ENCODE measurements at regions of chr12 and their contacts with region 1.

Region 1: DNA sequence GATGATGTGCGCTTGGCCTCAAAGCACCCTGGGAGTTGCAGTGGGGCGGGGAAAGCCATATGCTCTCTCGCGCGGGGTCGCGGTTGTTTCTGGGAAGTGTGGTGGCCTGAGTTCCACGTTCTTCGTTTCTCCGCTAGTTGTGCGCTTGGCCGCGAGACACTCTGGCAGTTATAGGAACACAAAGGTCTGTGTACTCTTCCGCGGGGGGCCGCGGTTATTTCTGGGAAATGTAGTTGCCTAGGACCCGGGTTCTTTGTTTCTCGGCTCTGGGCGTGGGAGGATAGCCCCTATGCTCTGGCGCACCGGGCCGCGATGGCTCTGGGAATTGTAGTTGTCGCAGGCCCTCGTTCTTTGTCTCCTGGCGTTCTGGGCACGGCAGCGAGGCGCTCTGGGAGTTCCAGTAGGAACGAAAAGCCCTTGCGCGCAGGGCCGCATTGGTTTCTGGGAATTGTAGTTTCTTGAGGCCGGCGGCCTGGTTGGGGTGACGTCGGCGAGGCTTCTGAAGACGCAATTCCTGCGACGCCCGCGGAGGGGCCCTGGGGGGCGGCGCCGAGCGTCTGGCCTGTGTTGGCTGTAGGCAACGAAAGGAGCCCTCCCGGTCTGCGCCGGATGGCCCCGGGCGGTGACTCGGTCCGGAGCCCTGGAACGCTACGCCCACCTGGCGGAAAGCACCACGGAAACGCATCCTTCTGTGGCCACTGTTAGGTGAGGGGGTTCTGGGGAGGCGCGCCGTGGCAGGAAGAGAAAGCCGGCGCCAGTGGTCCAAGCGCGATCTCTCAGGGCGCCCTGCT is at the start of gene ZNF140:
- DNase-seq: peak; percentile 98
- H3K4me3 ChIP-seq: peak within 1 kb of the TSS; percentile 86
- H3K27ac ChIP-seq: peak within 1 kb of the TSS; percentile 87
- H3K4me1 ChIP-seq: peaks cover 15% of the 10 kb centered on the region
- CTCF ChIP-seq: 0 out of 2 replicates have a peak, but pooled peaks have one; percentile 35
- total RNA-seq, gene ZNF140: 13.4 and 16.3 TPM in 2 replicates

Region 2: DNA sequence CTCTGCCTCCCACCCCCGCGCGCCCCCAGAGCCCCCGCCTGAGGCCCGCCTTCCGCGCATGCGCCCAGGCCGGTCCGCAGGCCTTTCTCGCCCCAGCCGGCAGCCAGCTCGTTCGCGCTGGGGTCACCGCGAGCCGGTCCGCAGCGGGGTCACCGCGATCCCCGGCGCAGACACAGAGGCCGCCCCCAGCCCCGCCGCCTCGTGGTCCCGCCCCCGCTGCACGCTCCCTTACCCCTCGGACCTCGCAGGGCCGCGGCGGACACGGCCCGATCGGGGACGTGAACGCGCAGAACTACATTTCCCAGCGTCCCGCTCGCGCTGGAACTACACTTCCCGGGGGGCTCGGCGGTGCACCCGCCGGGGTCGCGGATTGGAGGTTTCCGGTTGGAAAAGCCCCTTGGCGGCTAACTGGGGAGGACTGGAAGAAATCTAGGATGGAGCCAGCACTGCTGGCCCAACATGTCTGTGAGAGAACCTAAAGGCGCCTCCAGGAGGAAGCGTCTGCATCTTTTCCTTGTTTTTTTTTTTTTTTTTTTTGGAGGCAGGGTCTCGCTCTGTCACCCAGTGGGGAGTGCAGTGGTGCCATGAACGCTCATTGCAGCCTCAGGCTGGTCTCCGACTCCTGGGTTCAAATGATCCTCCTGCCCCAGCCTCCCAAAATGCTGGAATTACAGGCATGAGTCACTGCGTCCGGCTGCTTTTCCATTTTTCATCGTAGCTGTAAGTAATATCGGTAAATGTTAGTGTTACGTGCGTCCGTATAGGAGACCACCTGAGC is 124.4 kb before region 1 on chr12 and contains the start of gene ZNF605:
- CTCF ChIA-PET with region 1: no interaction called
- POLR2A ChIA-PET with region 1: interaction called, 4 read pairs
- intact Hi-C with region 1: loop called (anchors 1 kb)
- DNase-seq: peak; percentile 89
- H3K4me3 ChIP-seq: peak within 1 kb of the TSS; percentile 95
- H3K27ac ChIP-seq: peak within 1 kb of the TSS; percentile 34
- H3K4me1 ChIP-seq: peaks cover 5% of the 10 kb centered on the region
- CTCF ChIP-seq: no peak
- total RNA-seq, gene ZNF605: 6.6 and 7.1 TPM in 2 replicates

Region 3: GRCh38 chr12:132986001-132986912 is 94.3 kb before region 1 on chr12 and contains the start of gene ZNF26:
- CTCF ChIA-PET with region 1: no interaction called
- POLR2A ChIA-PET with region 1: interaction called, 4 read pairs
- intact Hi-C with region 1: loop called (anchors 1 kb)
- DNase-seq: peak; percentile 96
- H3K4me3 ChIP-seq: peak within 1 kb of the TSS; percentile 94
- H3K27ac ChIP-seq: no peak within 1 kb of the TSS
- H3K4me1 ChIP-seq: peaks cover 13% of the 10 kb centered on the region
- CTCF ChIP-seq: no peak
- total RNA-seq, gene ZNF26: 12.5 and 15.7 TPM in 2 replicates

Region 4: GRCh38 chr12:133037207-133038005 is 43.2 kb before region 1 on chr12 and contains the start of gene ZNF84:
- CTCF ChIA-PET with region 1: no interaction called
- POLR2A ChIA-PET with region 1: no interaction called
- intact Hi-C with region 1: loop called (anchors 1 kb)
- DNase-seq: peak; percentile 98
- H3K4me3 ChIP-seq: peak within 1 kb of the TSS; percentile 86
- H3K27ac ChIP-seq: peak within 1 kb of the TSS; percentile 81
- H3K4me1 ChIP-seq: peaks cover 8% of the 10 kb centered on the region
- CTCF ChIP-seq: no peak
- total RNA-seq, gene ZNF84: 22.1 and 26.9 TPM in 2 replicates

Region 5: GRCh38 chr12:133130038-133130807 is 49.7 kb after region 1 on chr12 and contains the starts of genes ZNF10 and ZNF891:
- CTCF ChIA-PET with region 1: no interaction called
- POLR2A ChIA-PET with region 1: no interaction called
- intact Hi-C with region 1: loop called (anchors 1 kb)
- DNase-seq: peak; percentile 94
- H3K4me3 ChIP-seq: peak within 1 kb of the TSS; percentile 79
- H3K27ac ChIP-seq: peak within 1 kb of the TSS; percentile 62
- H3K4me1 ChIP-seq: no peaks in the 10 kb centered on the region
- CTCF ChIP-seq: no peak
- total RNA-seq, gene ZNF10: 5.9 and 8.0 TPM in 2 replicates
- total RNA-seq, gene ZNF891: 3.1 and 3.2 TPM in 2 replicates

Region 6: GRCh38 chr12:133181238-133181959 is 100.8 kb after region 1 on chr12 and contains the start of gene ZNF268:
- CTCF ChIA-PET with region 1: no interaction called
- POLR2A ChIA-PET with region 1: no interaction called
- intact Hi-C with region 1: loop called (anchors 1 kb)
- DNase-seq: peak; percentile 98
- H3K4me3 ChIP-seq: peak within 1 kb of the TSS; percentile 82
- H3K27ac ChIP-seq: peak within 1 kb of the TSS; percentile 40
- H3K4me1 ChIP-seq: peaks cover 7% of the 10 kb centered on the region
- CTCF ChIP-seq: peak; percentile 90
- total RNA-seq, gene ZNF268: 7.7 and 19.1 TPM in 2 replicates

Measured in OCI-LY7 (cell line).